ENCODE measurements at regions of chrX and their contacts with region 1.

Region 1: GRCh38 chrX:134654398-134655012 is 3.8 kb downstream of the PLAC1 start:
- DNase-seq: peak; percentile 64
- ATAC-seq: peak; percentile 99
- H3K4me3 Mint-ChIP-seq: no peak overlapping the region
- H3K27ac Mint-ChIP-seq: no peak overlapping the region
- H3K4me1 Mint-ChIP-seq: peaks cover 14% of the 10 kb centered on the region
- H3K27me3 Mint-ChIP-seq: peaks cover 21% of the 10 kb centered on the region

Region 2: GRCh38 chrX:134622056-134622812 is 32.3 kb before region 1 on chrX:
- CTCF ChIA-PET with region 1: no interaction called
- POLR2A ChIA-PET with region 1: no interaction called
- intact Hi-C with region 1: loop called (anchors 1 kb)
- DNase-seq: peak; percentile 46
- ATAC-seq: peak; percentile 89
- H3K4me3 Mint-ChIP-seq: no peak overlapping the region
- H3K27ac Mint-ChIP-seq: no peak overlapping the region
- H3K4me1 Mint-ChIP-seq: peaks cover 29% of the 10 kb centered on the region
- H3K27me3 Mint-ChIP-seq: peaks cover 18% of the 10 kb centered on the region

Region 3: DNA sequence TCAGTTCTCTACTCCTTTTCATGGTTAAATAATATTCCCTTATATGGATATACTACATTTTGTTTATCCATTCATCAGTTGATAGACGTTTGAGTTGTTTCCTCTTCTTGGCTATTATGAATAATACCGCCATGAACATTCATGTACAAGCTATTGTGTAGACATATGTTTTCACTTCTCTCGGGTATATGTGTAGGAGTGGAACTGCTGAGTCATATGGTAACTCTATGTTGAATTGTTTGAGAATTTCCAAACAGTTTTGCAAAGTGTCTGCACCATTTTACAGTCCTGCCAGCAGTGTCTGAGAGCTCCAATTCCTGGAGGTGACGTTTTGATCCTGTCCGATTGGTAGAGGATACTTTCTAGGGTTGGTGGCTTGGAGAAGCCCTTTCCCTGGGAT is 19.8 kb before region 1 on chrX:
- CTCF ChIA-PET with region 1: interaction called, 4 read pairs
- POLR2A ChIA-PET with region 1: no interaction called
- intact Hi-C with region 1: loop called in 1 of 2 experiments (anchors 1 kb)
- DNase-seq: no peak
- ATAC-seq: peak; percentile 78
- H3K4me3 Mint-ChIP-seq: no peak overlapping the region
- H3K27ac Mint-ChIP-seq: no peak overlapping the region
- H3K4me1 Mint-ChIP-seq: peaks cover 6% of the 10 kb centered on the region
- H3K27me3 Mint-ChIP-seq: peaks cover 16% of the 10 kb centered on the region

Measured in activated CD4-positive, alpha-beta T cell treated with anti-CD3 and anti-CD28 coated beads for 36 hours (primary cell).